BJ (cell line): ENCODE measurements at regions of chr14 and their contacts with region 1.

Region 1: DNA sequence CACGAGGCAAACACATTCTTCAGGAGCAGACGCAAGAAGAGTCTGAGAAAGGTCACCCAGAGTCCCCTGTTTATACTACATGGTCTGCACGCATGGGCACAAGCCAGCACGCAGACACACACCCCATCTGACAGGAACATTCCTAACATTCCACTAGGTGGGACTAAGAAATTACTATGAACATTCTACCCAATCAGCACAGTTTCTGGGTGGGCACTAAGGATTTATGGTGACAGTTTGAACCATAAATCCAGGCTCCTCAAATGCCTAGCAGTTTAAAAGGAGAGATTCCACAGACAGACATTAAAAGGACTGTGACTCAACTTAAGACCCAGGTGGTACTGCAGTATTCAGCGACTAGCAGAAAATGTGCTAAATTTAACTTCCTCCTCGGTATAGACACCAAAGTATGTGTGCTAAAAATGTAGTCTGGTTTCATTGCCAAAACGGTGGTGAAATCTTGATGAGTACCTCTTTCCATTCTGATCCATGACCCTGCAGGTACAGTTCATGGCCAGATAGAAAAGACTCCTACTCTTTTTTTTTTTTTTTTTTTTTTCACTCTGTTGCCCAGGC is 16.2 kb downstream of the ABHD4 start:
- DNase-seq: peak; percentile 100
- H3K4me3 ChIP-seq: no peak overlapping the region
- H3K27me3 ChIP-seq: no peaks in the 10 kb centered on the region
- CTCF ChIP-seq: no peak

Region 2: DNA sequence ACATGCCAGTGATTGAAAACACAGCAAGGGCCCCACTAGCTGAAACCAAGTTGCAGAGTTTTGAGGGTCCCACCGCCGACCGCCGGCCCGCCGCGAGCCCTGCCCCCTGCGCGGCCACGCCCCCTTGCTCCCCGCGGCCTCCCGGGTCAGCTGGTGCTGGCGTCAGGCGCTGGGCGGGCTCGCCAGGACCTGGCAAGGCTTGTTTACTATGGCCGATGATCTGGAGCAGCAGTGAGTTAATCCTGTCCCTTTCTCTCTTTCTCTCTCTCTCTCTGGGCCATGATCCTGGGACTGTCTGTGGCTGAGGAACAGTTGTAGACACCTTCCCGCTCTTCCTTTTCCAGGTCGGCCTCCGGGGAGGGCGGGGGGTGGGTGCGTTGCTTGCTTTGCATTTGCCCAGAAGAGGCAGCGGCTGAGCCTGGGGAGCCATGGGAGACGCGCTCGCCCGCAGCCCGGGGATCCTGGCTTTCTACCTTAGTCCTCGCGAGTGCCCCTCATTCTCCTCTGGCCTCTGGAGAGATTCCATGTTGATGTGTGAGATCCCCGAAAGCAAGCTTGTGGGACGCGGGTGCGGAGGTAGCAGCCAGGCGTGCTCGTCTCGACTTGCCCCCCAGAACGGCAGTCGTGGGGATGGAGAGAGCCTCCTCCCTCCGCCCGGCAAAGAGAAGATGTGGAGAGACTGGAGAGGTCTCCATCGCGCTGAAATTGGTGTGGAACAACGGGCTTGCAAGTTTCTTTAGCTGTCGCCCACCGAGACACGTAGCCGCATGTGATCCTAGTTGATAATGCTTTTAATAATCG is 16.0 kb before region 1 on chr14 and contains the start of gene ABHD4:
- CTCF ChIA-PET with region 1: interaction called, 45 read pairs
- POLR2A ChIA-PET with region 1: no interaction called
- DNase-seq: no peak
- H3K4me3 ChIP-seq: peak within 1 kb of the TSS; percentile 95
- H3K27me3 ChIP-seq: peaks cover 2% of the 10 kb centered on the region
- CTCF ChIP-seq: no peak
- polyA plus RNA-seq, gene ABHD4: 77.2 and 115 TPM in 2 replicates

Region 3: GRCh38 chr14:22630486-22630885 is 16.2 kb after region 1 on chr14:
- CTCF ChIA-PET with region 1: no interaction called
- POLR2A ChIA-PET with region 1: no interaction called
- DNase-seq: no peak
- H3K4me3 ChIP-seq: no peak overlapping the region
- H3K27me3 ChIP-seq: peaks cover 5% of the 10 kb centered on the region; the same call in 1 of the 2 replicates
- CTCF ChIP-seq: no peak

Region 4: DNA sequence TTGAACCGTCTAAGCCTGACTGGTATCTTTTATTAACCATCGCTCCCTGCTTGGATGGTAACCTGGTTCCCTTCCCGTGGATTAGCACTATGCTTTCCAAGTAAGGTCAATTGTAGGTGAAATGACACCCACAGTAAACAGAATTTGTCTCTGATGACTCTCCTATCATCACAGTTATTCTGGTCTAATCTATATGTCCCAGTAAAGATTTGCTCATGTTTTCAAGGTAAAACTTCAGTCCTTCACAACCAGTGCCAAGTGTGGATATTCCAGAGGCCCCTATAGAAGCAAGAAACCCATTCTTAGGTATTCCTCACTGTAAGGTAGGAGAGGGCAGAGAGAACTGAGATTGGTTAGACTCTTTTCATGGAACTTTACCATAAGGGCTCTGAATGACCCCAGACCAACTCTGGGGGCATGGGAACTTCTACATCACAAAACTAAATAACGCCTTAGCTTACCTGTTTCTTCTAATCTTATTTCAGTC is 352.5 kb after region 1 on chr14:
- CTCF ChIA-PET with region 1: no interaction called
- POLR2A ChIA-PET with region 1: interaction called, 21 read pairs
- DNase-seq: no peak
- H3K4me3 ChIP-seq: no peak overlapping the region
- H3K27me3 ChIP-seq: no peaks in the 10 kb centered on the region
- CTCF ChIP-seq: no peak